Dorsolateral prefrontal cortex (tissue), 120 donors: ENCODE measurements at regions of chr12 and their contacts with region 1.

Region 1: GRCh38 chr12:109625131-109625559 is 51.6 kb downstream of the MVK start:
- DNase-seq: peak; percentile 70 to 97 (median 91)
- H3K4me3 ChIP-seq: peak overlapping the region in 3 of 59 donors; percentile 7 to 26 (median 14)
- H3K27ac ChIP-seq: peak overlapping the region in 58 of 59 donors; percentile 81 to 99 (median 95)
- H3K27me3 ChIP-seq: peaks cover 0 to 4% (median 0%) of the 10 kb centered on the region in 45 donors
- CTCF ChIP-seq: peak in 30 of 56 donors; percentile 10 to 50 (median 32)

Region 2: DNA sequence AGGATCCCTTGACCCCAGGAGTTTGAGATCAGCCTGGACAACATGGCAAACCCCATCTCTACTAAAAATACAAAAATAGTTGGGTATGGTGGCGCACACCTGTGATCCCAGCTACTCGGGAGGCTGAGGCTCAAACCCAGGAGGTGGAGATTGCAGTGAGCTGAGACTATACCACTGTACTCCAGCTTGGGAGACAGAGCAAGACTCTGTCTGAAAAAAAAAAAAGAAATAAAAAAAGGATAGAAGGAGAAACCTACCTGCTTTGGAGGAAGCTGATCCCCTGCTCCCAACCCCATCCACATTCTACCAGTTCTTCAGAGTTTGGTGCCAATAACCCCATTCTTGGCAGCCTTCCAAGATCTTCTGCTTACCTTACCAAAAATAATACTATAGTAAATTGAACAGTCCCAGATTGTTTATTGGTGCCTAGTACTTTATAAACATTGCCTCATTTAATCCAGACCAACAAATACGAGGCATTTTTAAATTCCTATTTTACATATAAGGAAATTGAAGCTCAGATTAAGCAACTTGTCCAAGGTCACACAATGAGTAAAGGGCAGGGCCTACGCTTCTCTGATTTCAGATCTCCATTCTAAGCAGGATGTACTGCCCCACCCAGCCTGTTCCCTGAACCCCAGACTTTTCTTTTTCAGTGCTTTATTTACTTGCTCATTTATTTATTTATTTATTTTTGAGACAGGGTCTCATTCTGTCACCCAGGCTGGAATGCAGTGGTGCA is 55.3 kb after region 1 on chr12:
- intact Hi-C with region 1: no loop called
- DNase-seq: peak in 2 of 10 donors; percentile 7 to 22
- H3K4me3 ChIP-seq: no peak overlapping the region
- H3K27ac ChIP-seq: no peak overlapping the region
- H3K27me3 ChIP-seq: no peaks in the 10 kb centered on the region
- CTCF ChIP-seq: no peak

Region 3: GRCh38 chr12:109719236-109720022 is 94.3 kb after region 1 on chr12:
- intact Hi-C with region 1: loop called in 1 of 2 experiments (anchors 5 kb)
- DNase-seq: no peak
- H3K4me3 ChIP-seq: peak overlapping the region in 37 of 59 donors; percentile 6 to 89 (median 78)
- H3K27ac ChIP-seq: peak overlapping the region in 58 of 59 donors; percentile 20 to 97 (median 84)
- H3K27me3 ChIP-seq: peaks cover 0 to 5% (median 0%) of the 10 kb centered on the region in 45 donors
- CTCF ChIP-seq: peak in 41 of 56 donors; percentile 12 to 53 (median 30)

Region 4: DNA sequence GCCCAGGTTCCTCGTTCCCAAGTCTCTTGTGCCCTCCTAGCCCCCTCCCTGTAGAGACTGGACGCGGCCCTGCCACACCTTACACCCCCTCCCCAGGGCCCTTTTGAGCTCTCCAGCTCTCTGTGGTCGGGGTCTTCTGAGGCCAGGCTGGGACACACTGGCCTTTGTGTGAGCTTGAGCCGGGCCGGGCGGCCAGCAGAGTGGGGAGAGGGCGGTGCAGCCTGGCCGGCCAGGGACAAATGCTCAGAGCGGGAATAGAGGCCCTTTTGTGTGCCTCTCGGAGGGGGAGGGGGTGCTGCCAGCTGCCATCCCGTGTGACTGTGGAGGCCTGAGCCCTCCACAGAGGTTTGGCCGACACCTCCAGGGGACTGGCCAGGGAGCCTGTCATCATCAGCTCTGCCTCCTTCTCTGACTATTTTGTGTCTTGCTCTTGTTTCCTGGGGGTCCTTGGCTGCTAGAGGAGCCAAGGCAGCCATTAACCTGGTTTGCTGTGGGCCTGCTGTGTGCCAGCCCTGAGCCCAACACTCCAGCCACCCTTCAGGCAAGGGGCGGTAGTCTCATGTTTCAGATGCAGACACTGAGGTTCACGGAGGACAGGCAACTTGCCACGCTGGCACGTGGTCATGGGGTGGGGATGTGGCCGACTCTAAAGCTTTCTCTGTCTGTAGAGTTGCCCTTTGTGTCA is 102.0 kb after region 1 on chr12:
- intact Hi-C with region 1: loop called in 1 of 2 experiments (anchors 1 kb)
- DNase-seq: peak; percentile 44 to 94 (median 92)
- H3K4me3 ChIP-seq: peak overlapping the region in 22 of 59 donors; percentile 1 to 51 (median 20)
- H3K27ac ChIP-seq: peak overlapping the region; percentile 64 to 97 (median 92)
- H3K27me3 ChIP-seq: no peaks in the 10 kb centered on the region
- CTCF ChIP-seq: peak in 15 of 56 donors; percentile 9 to 38 (median 25)